Transverse colon (tissue), 4 donors: ENCODE measurements at regions of chr3 and their contacts with region 1.

Region 1: DNA sequence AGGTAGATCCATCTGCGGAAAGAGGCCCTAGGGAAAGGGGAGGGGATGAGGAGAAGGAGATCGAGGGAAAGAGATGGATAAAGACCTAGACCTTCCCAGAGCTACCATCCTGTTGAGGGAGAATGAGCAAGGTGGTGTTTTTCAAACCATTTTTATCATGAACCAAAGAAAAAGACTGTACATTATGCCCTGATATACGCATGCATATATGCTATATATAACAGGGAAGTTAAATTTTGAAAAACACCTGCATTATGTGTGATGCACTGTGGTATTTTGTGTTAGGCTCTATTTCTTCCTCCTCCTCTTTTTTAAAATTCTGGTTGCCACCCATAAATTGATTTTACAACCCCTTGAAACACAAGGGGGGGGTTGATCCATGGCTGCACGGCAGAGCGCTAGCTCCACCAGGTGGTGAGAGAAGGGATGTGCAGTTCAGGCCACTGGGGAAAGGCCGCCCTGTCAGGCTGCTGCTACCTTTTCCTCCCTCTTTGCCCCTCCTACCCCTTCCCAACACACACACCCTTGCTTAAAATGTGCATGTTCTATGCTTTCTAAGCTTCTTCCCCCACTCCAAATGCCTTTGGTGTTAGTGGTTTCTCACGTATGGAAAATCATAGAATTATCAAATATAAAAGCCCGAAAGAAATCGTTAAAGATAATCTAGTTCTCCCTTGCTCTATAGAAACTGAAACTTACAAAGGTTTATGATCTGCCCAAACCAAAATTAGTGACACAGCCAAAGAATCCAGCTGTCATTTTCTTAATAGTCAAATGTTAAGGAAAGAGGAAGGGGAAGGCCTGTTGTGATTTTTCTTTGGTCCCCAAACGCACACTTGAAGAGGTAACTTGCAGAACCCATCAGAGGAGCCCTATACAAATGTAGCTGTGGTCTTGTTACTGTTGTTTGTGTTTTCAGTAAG is 262.0 kb upstream of the UMPS start:
- DNase-seq: peak; percentile 41
- H3K4me3 ChIP-seq: no peak overlapping the region
- H3K27ac ChIP-seq: no peak overlapping the region
- H3K4me1 ChIP-seq: peaks cover 0 to 2% (median 0%) of the 10 kb centered on the region in 4 donors
- H3K27me3 ChIP-seq: no peaks in the 10 kb centered on the region
- CTCF ChIP-seq: peak; percentile 89 to 94 (median 93)
- EP300 ChIP-seq: no peak
- POLR2A ChIP-seq: no peak

Region 2: DNA sequence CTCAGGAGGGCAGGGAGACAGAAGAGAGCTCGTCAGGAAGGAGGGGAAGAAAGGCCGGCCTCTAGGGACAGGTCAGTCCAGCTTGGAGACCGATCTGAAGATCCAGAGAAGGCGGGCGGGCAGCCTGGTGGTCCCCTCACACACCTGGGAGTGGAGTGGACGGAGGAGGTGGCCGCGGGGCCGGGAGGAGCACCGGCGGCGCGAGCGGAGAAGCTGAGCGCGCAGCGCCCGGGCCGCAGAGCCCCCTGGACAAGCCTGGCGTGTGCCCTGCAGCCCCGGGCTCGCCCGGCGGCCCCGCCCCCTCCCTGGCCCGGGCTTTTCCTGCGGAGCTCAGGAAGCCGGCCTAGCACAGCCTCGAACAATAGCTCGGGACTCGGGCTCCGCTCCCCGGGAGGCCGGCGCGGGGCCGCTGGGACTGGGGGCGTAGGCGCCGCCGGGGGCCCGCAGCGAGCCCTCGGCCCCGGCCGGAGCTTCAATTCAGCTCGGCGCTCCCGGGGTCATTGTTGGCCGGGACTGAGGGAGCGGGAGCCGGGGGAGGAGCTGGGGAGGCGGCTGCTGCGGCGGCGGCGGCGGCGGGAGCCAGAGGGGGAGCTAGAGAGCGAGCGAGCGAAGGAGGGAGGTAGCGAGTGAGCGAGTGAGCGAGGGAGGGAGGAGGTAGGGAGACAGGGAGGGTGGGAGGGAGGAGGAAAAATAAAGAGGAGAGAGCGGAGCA is 435.4 kb before region 1 on chr3:
- in situ Hi-C with region 1: loop called in 1 of 4 experiments (anchors 25 kb)
- intact Hi-C with region 1: no loop called
- DNase-seq: peak; percentile 90
- H3K4me3 ChIP-seq: peak overlapping the region; percentile 66 to 86 (median 76)
- H3K27ac ChIP-seq: peak overlapping the region; percentile 82 to 88 (median 84)
- H3K4me1 ChIP-seq: peaks cover 0 to 22% (median 12%) of the 10 kb centered on the region in 4 donors
- H3K27me3 ChIP-seq: peaks cover 32% of the 10 kb centered on the region
- CTCF ChIP-seq: peak; percentile 25 to 89 (median 75)
- EP300 ChIP-seq: no peak
- POLR2A ChIP-seq: no peak

Region 3: DNA sequence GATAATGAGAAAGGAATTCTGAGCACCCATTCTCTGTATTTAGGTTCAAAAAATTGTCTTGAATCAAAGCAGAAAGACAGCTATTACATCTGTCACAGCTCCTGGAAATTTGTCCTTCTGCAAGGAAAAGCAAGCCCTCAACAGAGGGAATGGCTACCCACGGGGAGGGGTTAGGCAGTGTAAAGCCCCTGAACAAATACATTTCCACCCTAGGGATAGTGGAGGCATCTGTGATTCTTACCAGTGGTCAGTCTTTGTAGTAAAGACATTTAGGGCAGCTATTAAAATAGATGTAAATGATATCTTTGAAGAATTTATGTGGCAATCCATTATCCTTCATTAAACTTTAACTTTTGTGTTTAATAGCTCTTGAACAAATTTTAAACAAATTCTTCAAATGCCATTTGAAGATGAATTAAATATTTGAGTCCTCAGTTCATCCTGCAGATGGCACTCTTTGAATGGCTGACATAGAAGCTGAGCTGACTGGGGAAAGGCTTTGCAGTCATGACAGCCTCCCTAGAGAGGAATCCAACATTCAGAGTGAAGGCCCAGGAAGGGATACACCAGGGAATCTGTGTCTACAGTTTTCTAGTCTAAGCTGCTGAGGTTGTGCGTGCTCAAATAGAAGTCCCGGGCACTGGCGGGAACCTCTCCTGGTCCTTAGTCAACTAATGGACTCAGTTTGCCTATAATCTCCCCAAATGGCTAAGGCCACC is 116.7 kb before region 1 on chr3:
- in situ Hi-C with region 1: loop called in 2 of 4 experiments (anchors 5 to 10 kb)
- intact Hi-C with region 1: loop called (anchors 10 kb)
- DNase-seq: no peak
- H3K4me3 ChIP-seq: no peak overlapping the region
- H3K27ac ChIP-seq: no peak overlapping the region
- H3K4me1 ChIP-seq: peaks cover 0 to 3% (median 0%) of the 10 kb centered on the region in 4 donors
- H3K27me3 ChIP-seq: no peaks in the 10 kb centered on the region
- CTCF ChIP-seq: peak; percentile 48 to 66 (median 51)
- EP300 ChIP-seq: no peak
- POLR2A ChIP-seq: no peak

Region 4: GRCh38 chr3:124650798-124651197 is 182.6 kb after region 1 on chr3:
- in situ Hi-C with region 1: no loop called
- intact Hi-C with region 1: no loop called
- DNase-seq: no peak
- H3K4me3 ChIP-seq: no peak overlapping the region
- H3K27ac ChIP-seq: no peak overlapping the region
- H3K4me1 ChIP-seq: no peaks in the 10 kb centered on the region
- H3K27me3 ChIP-seq: no peaks in the 10 kb centered on the region
- CTCF ChIP-seq: no peak
- EP300 ChIP-seq: no peak
- POLR2A ChIP-seq: no peak